BJ (cell line): ENCODE measurements at regions of chr9 and their contacts with region 1.

Region 1: GRCh38 chr9:137423004-137423874 is at the starts of genes EXD3 and NOXA1:
- DNase-seq: peak; percentile 19
- H3K4me3 ChIP-seq: peak within 1 kb of the TSS; percentile 73
- H3K27me3 ChIP-seq: no peaks in the 10 kb centered on the region
- CTCF ChIP-seq: peak; percentile 48
- polyA plus RNA-seq, gene EXD3: 4.9 and 5.4 TPM in 2 replicates
- polyA plus RNA-seq, gene NOXA1: 0.20 and 0.32 TPM in 2 replicates

Region 2: DNA sequence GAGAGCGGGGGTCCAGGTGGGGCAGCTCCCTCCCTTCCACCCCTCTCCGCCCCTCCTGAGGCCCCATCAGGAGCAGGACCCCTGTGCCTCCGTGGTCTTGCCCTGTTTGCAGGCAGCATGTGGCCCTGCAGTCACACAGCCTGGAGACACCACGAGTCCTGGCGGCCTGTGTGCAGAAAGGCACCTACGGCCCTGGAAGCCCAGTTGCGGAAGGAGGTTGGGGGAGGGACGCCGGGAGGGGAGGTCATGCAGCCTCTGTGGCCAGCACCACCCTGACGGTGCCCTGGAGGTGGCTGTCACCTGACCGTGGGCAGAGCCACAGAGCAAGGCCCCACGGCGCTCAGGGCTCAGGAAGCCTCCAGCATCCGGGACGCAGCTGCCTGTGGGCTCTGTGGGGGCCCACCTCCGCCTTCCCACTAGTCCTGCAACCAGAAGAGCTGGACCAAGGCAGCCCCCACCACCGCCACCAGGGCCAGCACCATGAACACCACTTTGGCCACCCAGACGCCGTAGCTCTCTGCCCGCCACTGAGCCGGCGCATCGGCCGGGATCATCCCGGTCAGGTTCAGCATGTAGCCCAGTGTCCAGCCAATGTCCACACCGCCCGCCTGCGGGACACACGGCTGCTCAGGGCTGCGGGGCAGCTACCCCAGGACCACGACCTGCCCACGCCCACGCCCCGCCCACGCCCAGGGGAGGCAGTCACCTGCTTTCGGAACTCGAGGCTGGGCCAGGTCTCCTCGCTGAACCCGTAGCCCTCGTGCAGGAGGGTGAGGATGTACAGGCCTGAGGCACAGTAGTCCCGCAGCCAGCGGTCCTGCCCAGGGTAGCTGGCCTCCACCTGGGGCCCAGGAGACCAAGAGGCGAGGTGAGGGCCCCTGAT is 11.5 kb after region 1 on chr9:
- CTCF ChIA-PET with region 1: interaction called, 12 read pairs
- POLR2A ChIA-PET with region 1: no interaction called
- DNase-seq: no peak
- H3K4me3 ChIP-seq: no peak overlapping the region
- H3K27me3 ChIP-seq: no peaks in the 10 kb centered on the region
- CTCF ChIP-seq: no peak

Region 3: GRCh38 chr9:137488327-137488653 is 65.1 kb after region 1 on chr9:
- CTCF ChIA-PET with region 1: no interaction called
- POLR2A ChIA-PET with region 1: no interaction called
- DNase-seq: no peak
- H3K4me3 ChIP-seq: no peak overlapping the region
- H3K27me3 ChIP-seq: no peaks in the 10 kb centered on the region
- CTCF ChIP-seq: no peak